Panc1 (cell line): ENCODE measurements at regions of chr3 and their contacts with region 1.

Region 1: DNA sequence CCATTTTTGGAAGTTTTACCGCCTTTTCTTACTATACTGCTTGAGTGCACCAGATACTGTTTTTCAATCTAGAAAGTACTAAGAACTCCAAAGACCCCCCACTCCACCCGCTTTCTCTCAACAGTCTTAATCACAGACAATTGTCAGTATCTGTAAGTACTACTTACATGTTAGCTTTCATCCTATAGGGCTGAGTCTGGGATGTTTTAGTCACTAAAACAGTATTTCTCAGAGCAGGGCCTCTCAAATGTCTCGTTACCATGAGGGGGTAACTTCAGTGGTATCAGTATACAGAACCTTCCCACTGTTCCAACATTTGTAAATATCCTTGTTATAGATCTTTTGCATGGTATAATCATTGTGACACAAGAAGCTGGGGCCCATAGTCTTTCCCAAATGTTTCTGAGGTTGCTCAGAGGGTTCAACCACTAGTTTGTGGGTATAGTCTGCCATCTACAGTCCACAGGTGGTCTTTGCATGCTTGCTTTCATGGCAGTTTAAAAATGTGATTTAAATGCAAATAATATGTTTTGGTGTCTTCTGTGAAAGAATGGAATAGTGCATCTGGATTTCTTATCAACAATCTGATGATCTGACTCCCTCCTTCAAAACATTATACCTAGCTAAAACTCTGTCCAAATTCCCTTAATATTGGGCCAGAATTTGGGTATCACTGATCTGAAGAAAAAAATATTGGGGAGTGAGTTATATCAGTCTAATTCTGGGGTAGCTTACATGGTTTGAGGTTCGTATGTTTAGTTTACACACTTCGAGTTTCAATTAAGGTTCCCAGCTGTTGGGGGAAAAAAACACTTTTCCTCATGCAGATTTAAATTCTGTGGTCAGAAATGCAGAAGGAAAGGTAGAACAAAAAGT is 18.0 kb upstream of the DNAJC13 start:
- DNase-seq: peak; percentile 28
- ATAC-seq: peak; percentile 86
- H3K4me3 ChIP-seq: no peak overlapping the region
- H3K27ac ChIP-seq: no peak overlapping the region
- H3K4me1 ChIP-seq: no peaks in the 10 kb centered on the region
- H3K27me3 ChIP-seq: peaks cover 27% of the 10 kb centered on the region
- CTCF ChIP-seq: peak; percentile 82

Region 2: DNA sequence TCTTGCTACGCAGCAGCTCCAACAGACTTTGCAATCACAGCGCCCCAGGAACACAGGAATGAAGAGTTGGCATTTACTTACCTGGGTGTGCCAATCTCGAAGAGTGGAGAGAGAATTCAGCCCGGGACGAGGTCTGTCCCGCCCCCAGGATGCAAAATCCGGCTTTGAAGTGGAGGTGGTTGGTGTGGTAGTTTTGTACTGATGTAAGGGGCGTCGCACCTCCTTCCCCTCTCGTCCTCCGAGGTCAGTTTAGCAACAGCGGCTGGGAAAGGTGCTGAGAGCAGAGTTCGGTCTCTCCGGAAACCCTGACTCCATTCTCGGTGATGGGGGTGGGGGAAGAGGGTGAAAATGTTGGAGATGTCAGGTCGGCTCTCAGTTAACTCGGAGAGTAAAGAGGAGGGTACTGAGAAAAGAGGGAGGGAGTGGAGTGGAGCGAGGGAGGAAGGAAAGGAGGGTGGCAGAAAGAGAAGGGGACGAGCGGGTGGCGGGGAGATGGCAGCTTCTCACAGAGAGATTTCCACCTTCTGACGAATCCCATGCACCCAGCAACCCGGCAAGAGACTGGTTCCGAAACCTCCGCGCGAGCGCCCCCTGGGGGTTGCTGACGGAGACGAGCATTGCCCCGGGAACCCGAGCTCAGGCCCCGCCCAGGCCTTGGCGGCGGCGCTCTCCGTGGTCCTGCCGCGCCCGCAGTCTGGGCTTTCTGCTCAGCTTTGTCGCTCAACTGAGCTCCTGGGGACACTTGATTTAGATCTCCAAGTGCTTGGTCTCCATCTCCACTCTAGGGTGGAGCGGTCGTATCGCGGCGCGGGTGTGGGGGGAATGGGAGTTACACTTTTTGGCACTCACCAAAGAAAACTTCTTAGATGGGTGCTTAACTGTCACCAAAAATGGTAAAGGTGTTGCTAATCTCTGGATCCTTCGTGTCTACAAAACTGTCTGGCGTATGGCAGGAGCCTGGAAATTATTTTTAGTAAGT is 364.5 kb before region 1 on chr3 and contains the start of gene CPNE4:
- CTCF ChIA-PET with region 1: no interaction called
- POLR2A ChIA-PET with region 1: no interaction called
- in situ Hi-C with region 1: no loop called
- intact Hi-C with region 1: loop called (anchors 10 kb)
- DNase-seq: peak; percentile 20
- ATAC-seq: peak; percentile 97
- H3K4me3 ChIP-seq: peak within 1 kb of the TSS; percentile 25 to 49
- H3K27ac ChIP-seq: no peak within 1 kb of the TSS
- H3K4me1 ChIP-seq: 0 out of 2 replicates have a peak, but pooled peaks cover 4% of the 10 kb centered on the region
- H3K27me3 ChIP-seq: peaks cover 44% of the 10 kb centered on the region
- CTCF ChIP-seq: peak; percentile 91
- total RNA-seq, gene CPNE4: not detected

Region 3: GRCh38 chr3:132253262-132253878 is 145.9 kb before region 1 on chr3:
- CTCF ChIA-PET with region 1: interaction called, 3 read pairs
- POLR2A ChIA-PET with region 1: no interaction called
- in situ Hi-C with region 1: no loop called
- intact Hi-C with region 1: loop called (anchors 2 kb)
- DNase-seq: peak; percentile 41
- ATAC-seq: peak; percentile 91
- H3K4me3 ChIP-seq: no peak overlapping the region
- H3K27ac ChIP-seq: no peak overlapping the region
- H3K4me1 ChIP-seq: no peaks in the 10 kb centered on the region
- H3K27me3 ChIP-seq: peaks cover 9% of the 10 kb centered on the region; the same call in 1 of the 2 replicates
- CTCF ChIP-seq: peak; percentile 85

Region 4: GRCh38 chr3:132352541-132353143 is 46.6 kb before region 1 on chr3:
- CTCF ChIA-PET with region 1: interaction called, 4 read pairs
- POLR2A ChIA-PET with region 1: no interaction called
- in situ Hi-C with region 1: no loop called
- intact Hi-C with region 1: loop called (anchors 1 kb)
- DNase-seq: peak; percentile 36
- ATAC-seq: peak; percentile 84
- H3K4me3 ChIP-seq: no peak overlapping the region
- H3K27ac ChIP-seq: no peak overlapping the region
- H3K4me1 ChIP-seq: no peaks in the 10 kb centered on the region
- H3K27me3 ChIP-seq: peaks cover 2% of the 10 kb centered on the region; the same call in 1 of the 2 replicates
- CTCF ChIP-seq: peak; percentile 91

Region 5: GRCh38 chr3:132556508-132557159 is 157.3 kb after region 1 on chr3:
- CTCF ChIA-PET with region 1: no interaction called
- POLR2A ChIA-PET with region 1: no interaction called
- in situ Hi-C with region 1: no loop called
- intact Hi-C with region 1: no loop called
- DNase-seq: no peak
- ATAC-seq: no peak
- H3K4me3 ChIP-seq: no peak overlapping the region
- H3K27ac ChIP-seq: no peak overlapping the region
- H3K4me1 ChIP-seq: no peaks in the 10 kb centered on the region
- H3K27me3 ChIP-seq: no peaks in the 10 kb centered on the region
- CTCF ChIP-seq: no peak